ENCODE measurements at regions of chr12 and their contacts with region 1.

Region 1: GRCh38 chr12:6470375-6471163 is at the start of gene VAMP1:
- DNase-seq: peak; percentile 97
- ATAC-seq: peak; percentile 91
- H3K4me3 Mint-ChIP-seq: peak within 1 kb of the TSS; percentile 95
- H3K27ac Mint-ChIP-seq: peak within 1 kb of the TSS; percentile 88
- H3K4me1 Mint-ChIP-seq: peaks cover 43% of the 10 kb centered on the region
- H3K27me3 Mint-ChIP-seq: peaks cover 8% of the 10 kb centered on the region
- total RNA-seq, gene VAMP1: 65.5 to 72.1 TPM

Region 2: DNA sequence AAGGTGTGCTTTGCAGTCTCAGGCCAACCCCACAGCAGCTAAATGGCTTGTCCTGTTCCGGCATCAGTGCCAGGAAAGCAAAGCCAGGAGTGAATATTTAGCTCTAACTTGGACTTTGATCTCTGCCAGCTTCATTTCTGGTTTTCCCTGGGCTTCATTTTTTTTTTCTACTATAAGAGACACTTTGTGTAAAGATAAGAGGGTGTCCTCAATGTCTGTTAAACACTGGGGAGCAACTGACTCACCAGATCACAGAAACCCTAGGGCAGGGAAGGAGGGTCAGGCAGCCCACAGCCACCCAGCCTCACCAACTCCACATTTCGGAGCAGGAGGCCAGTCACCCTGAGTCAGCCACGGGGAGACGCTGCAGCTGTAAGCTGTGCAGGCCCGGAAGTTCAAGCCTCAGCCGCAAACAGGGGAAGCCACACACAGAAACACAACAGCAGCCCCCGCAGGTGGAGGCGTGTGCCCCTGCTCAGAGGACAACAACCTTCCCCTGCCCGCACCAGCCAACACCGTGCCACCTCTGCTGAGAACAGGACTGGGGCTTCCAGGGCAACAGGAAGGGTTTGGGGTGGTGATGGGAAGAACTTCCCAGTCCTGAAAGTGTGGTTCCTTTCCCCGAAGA is 135.0 kb before region 1 on chr12:
- POLR2A ChIA-PET with region 1: interaction called, 16 read pairs
- DNase-seq: peak; percentile 84
- ATAC-seq: peak; percentile 57
- H3K4me3 Mint-ChIP-seq: no peak overlapping the region
- H3K27ac Mint-ChIP-seq: no peak overlapping the region
- H3K4me1 Mint-ChIP-seq: peaks cover 46% of the 10 kb centered on the region
- H3K27me3 Mint-ChIP-seq: no peaks in the 10 kb centered on the region

Region 3: GRCh38 chr12:6434205-6435140 is 36.1 kb before region 1 on chr12:
- POLR2A ChIA-PET with region 1: interaction called, 16 read pairs
- DNase-seq: no peak
- ATAC-seq: peak; percentile 95
- H3K4me3 Mint-ChIP-seq: peak overlapping the region; percentile 69
- H3K27ac Mint-ChIP-seq: peak overlapping the region; percentile 90
- H3K4me1 Mint-ChIP-seq: peaks cover 37% of the 10 kb centered on the region
- H3K27me3 Mint-ChIP-seq: no peaks in the 10 kb centered on the region

Region 4: GRCh38 chr12:6451348-6452244 is 19.0 kb before region 1 on chr12 and contains the start of gene TAPBPL:
- POLR2A ChIA-PET with region 1: interaction called, 177 read pairs
- DNase-seq: peak; percentile 73
- ATAC-seq: peak; percentile 83
- H3K4me3 Mint-ChIP-seq: peak within 1 kb of the TSS; percentile 98
- H3K27ac Mint-ChIP-seq: peak within 1 kb of the TSS; percentile 98
- H3K4me1 Mint-ChIP-seq: peaks cover 51% of the 10 kb centered on the region
- H3K27me3 Mint-ChIP-seq: no peaks in the 10 kb centered on the region
- total RNA-seq, gene TAPBPL: 49.4 to 50.1 TPM

Region 5: GRCh38 chr12:6533923-6534694 is 63.5 kb after region 1 on chr12 and contains the start of gene GAPDH:
- POLR2A ChIA-PET with region 1: interaction called, 72 read pairs
- DNase-seq: peak; percentile 91
- ATAC-seq: peak; percentile 62
- H3K4me3 Mint-ChIP-seq: peak within 1 kb of the TSS; percentile 100
- H3K27ac Mint-ChIP-seq: peak within 1 kb of the TSS; percentile 98
- H3K4me1 Mint-ChIP-seq: peaks cover 37% of the 10 kb centered on the region
- H3K27me3 Mint-ChIP-seq: no peaks in the 10 kb centered on the region
- total RNA-seq, gene GAPDH: 4,618 to 4,824 TPM

Measured in activated naive CD8-positive, alpha-beta T cell treated with anti-CD3 and anti-CD28 coated beads, Interleukin-2, amount 10 ng/mL, durations not matched to agents 7 days and 5 days (primary cell).